ENCODE measurements at regions of chr11 and their contacts with region 1.

Region 1: DNA sequence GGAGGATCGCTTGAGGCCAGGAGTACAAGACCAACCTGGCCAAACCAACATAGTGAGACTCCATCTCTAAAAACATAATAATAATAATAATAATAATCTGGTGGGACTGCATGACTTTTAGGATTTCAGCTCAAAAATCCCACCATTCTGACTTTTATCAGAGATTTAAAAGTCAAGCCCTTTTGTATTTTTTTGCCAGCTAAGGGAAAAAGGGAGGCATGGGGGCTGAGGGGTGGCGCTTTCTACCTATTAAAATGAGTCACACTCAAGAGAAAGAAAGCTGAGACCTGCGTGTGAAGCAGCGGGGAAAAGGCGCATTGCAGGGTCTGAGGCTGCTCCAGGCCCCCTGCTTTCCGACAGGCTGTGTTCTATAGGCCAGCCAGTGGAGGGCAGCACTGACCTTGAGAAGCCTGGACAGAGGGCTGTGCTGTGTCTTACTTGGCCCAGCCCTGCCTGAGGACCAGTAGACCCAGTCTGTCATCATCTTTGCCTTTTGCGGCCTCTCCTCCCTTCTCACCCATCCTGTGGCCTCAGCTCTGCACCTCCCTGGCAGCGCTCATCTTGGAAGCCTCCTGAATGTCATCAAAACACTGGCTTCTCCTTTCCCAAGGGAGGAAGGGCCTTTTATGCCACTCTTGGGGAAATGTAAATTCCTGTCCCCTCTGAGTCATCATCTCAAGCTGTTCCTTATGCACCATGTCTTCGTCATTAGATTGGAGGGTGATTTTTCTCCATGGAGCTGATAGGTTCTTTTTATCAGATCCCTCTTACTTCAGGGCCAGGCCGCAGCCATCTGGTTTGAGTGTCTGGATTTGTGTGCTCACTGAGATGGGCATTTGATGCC is 12.7 kb upstream of the MAPK8IP1 start:
- DNase-seq: peak; percentile 68 to 71
- ATAC-seq: peak; percentile 86 to 99
- H3K4me3 ChIP-seq: no peak overlapping the region
- H3K27ac ChIP-seq: no peak overlapping the region
- H3K4me1 ChIP-seq: no peaks in the 10 kb centered on the region
- CTCF ChIP-seq: peak; percentile 62
- EP300 ChIP-seq: no peak
- POLR2A ChIP-seq: no peak
- RAD21 ChIP-seq: peak; percentile 72 to 76

Region 2: DNA sequence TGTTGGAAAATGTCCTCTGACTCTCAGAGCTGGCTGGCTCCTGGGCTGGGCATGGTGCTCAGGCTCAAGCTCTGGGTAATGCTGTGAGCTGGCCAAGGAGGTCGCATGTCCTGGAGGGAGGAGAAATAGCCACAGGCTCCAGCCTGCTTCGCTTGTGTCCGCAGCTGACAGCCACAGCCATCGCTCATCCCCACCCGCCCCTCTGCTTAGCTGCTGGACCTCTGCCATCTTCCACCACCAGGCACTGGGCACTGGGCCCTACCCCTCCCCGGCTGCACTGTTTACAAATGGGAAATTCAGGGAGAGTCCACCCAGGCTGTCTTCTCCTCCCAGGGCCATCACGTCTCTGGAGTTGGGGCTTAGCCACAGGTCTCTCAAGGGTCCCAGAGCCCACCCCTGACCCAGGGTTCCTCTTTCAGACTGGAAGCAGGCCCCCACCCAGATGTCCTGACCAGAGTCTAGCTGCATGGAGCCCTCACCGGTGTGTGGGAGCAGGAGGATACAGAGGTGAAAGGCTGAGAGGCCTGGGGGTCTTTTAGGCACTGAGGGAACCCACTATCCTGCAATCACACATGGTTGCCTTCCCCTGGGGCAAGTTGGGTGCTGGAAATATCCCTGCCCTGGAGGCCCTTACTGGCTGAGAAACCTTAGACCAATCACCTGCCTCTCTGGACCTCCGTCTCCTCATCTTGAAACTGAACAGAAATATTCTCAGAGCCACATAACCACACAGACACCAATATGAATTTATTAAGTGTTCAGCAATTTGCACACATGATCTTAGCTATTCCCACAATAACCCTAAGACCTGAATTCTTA is 1244.6 kb before region 1 on chr11:
- CTCF ChIA-PET with region 1: no interaction called
- POLR2A ChIA-PET with region 1: no interaction called
- DNase-seq: no peak
- ATAC-seq: peak in 1 of 2 experiments; percentile 43; a peak in 3 of 6 replicates
- H3K4me3 ChIP-seq: no peak overlapping the region
- H3K27ac ChIP-seq: no peak overlapping the region
- H3K4me1 ChIP-seq: no peaks in the 10 kb centered on the region
- CTCF ChIP-seq: no peak
- EP300 ChIP-seq: no peak
- POLR2A ChIP-seq: no peak
- RAD21 ChIP-seq: no peak

Region 3: GRCh38 chr11:45859661-45860140 is 13.0 kb before region 1 on chr11:
- CTCF ChIA-PET with region 1: interaction called, 67 read pairs
- POLR2A ChIA-PET with region 1: no interaction called
- DNase-seq: no peak
- ATAC-seq: no peak
- H3K4me3 ChIP-seq: no peak overlapping the region
- H3K27ac ChIP-seq: no peak overlapping the region
- H3K4me1 ChIP-seq: no peaks in the 10 kb centered on the region
- CTCF ChIP-seq: no peak
- EP300 ChIP-seq: no peak
- POLR2A ChIP-seq: no peak
- RAD21 ChIP-seq: no peak

Region 4: GRCh38 chr11:45885274-45885920 is 12.7 kb after region 1 on chr11 and contains the start of gene MAPK8IP1:
- CTCF ChIA-PET with region 1: interaction called, 39 read pairs
- POLR2A ChIA-PET with region 1: no interaction called
- DNase-seq: peak in 1 of 2 experiments; percentile 27
- ATAC-seq: peak; percentile 60 to 75
- H3K4me3 ChIP-seq: peak within 1 kb of the TSS; percentile 59
- H3K27ac ChIP-seq: peak within 1 kb of the TSS in 1 of 2 experiments; percentile 52; a peak in 2 of 6 replicates
- H3K4me1 ChIP-seq: peaks cover 18% of the 10 kb centered on the region
- CTCF ChIP-seq: no peak
- EP300 ChIP-seq: no peak
- POLR2A ChIP-seq: no peak
- RAD21 ChIP-seq: no peak
- polyA plus RNA-seq, gene MAPK8IP1: 2.6 and 2.7 TPM in 2 replicates

Region 5: DNA sequence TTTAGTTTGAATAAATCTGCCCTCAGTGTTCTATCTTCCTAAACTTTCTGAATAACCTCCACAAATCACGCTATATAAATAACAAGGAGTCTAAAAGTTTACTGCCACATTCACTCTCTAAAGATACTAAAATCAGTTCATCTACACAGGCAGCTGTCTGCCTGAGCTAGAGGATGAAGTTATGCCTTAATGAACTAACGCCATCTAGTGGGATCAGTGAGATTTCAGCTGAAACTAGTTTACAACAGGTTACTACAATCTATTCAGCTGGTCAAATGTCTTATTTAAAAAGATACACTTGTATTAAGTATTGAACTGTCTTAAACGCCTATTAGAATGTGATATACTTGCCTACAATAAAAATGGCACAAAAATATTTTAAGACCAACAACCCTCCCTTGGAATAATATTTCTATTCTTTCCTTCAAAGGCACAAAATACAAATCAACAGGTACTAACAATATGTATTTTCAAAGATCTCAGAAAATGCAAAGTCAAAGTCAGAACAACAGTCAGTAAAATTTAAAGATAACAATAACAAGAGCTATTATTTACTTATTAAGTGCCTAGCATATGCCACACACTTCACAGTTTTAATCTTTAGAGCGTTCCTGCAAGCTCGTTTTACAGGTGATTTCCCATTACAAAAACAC is 133.8 kb after region 1 on chr11:
- CTCF ChIA-PET with region 1: interaction called, 15 read pairs
- POLR2A ChIA-PET with region 1: no interaction called
- DNase-seq: peak; percentile 73 to 74
- ATAC-seq: peak; percentile 88 to 94
- H3K4me3 ChIP-seq: no peak overlapping the region
- H3K27ac ChIP-seq: no peak overlapping the region
- H3K4me1 ChIP-seq: peaks cover 4% of the 10 kb centered on the region; the same call in 1 of the 3 replicates
- CTCF ChIP-seq: peak; percentile 82
- EP300 ChIP-seq: no peak
- POLR2A ChIP-seq: no peak
- RAD21 ChIP-seq: peak; percentile 66 to 76

Region 6: GRCh38 chr11:46090375-46090774 is 217.6 kb after region 1 on chr11:
- CTCF ChIA-PET with region 1: no interaction called
- POLR2A ChIA-PET with region 1: no interaction called
- DNase-seq: no peak
- ATAC-seq: no peak
- H3K4me3 ChIP-seq: no peak overlapping the region
- H3K27ac ChIP-seq: no peak overlapping the region
- H3K4me1 ChIP-seq: peaks cover 6% of the 10 kb centered on the region; the same call in 1 of the 3 replicates
- CTCF ChIP-seq: no peak
- EP300 ChIP-seq: no peak
- POLR2A ChIP-seq: no peak
- RAD21 ChIP-seq: no peak

Measured in A549 (cell line).